Activated CD4-positive, alpha-beta memory T cell treated with anti-CD3 and anti-CD28 coated beads, Interleukin-2, amount 10 ng/mL, durations not matched to agents 7 days and 5 days (primary cell): ENCODE measurements at regions of chr2 and their contacts with region 1.

Region 1: GRCh38 chr2:157777427-157777826 is 98.7 kb downstream of the ACVR1 start:
- DNase-seq: peak; percentile 56
- H3K4me3 Mint-ChIP-seq: no peak overlapping the region
- H3K27ac Mint-ChIP-seq: no peak overlapping the region
- H3K4me1 Mint-ChIP-seq: peaks cover 11% of the 10 kb centered on the region
- H3K27me3 Mint-ChIP-seq: no peaks in the 10 kb centered on the region

Region 2: GRCh38 chr2:157592948-157593347 is 184.5 kb before region 1 on chr2:
- CTCF ChIA-PET with region 1: no interaction called
- POLR2A ChIA-PET with region 1: no interaction called
- DNase-seq: no peak
- H3K4me3 Mint-ChIP-seq: no peak overlapping the region
- H3K27ac Mint-ChIP-seq: no peak overlapping the region
- H3K4me1 Mint-ChIP-seq: peaks cover 6% of the 10 kb centered on the region
- H3K27me3 Mint-ChIP-seq: peaks cover 9% of the 10 kb centered on the region

Region 3: DNA sequence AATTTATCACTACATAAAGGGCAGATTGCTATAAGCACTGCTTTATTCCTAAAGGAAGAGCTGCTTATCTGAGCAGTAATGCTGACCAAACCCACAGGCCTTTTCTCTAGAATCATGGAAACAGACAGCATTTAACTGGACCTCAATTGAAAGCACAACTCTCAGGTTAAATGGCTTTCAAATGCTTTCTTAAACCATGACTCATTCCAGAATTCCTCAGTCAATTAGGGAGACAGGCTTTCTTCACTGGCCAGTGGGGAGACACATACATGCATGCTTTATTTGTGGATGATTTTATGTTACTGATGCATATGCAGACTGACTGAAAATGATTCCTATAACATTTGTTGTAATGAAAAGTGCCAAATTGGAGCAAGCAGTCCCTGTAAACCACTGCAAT is 15.9 kb before region 1 on chr2:
- CTCF ChIA-PET with region 1: no interaction called
- POLR2A ChIA-PET with region 1: no interaction called
- DNase-seq: no peak
- H3K4me3 Mint-ChIP-seq: no peak overlapping the region
- H3K27ac Mint-ChIP-seq: no peak overlapping the region
- H3K4me1 Mint-ChIP-seq: no peaks in the 10 kb centered on the region
- H3K27me3 Mint-ChIP-seq: no peaks in the 10 kb centered on the region

Region 4: DNA sequence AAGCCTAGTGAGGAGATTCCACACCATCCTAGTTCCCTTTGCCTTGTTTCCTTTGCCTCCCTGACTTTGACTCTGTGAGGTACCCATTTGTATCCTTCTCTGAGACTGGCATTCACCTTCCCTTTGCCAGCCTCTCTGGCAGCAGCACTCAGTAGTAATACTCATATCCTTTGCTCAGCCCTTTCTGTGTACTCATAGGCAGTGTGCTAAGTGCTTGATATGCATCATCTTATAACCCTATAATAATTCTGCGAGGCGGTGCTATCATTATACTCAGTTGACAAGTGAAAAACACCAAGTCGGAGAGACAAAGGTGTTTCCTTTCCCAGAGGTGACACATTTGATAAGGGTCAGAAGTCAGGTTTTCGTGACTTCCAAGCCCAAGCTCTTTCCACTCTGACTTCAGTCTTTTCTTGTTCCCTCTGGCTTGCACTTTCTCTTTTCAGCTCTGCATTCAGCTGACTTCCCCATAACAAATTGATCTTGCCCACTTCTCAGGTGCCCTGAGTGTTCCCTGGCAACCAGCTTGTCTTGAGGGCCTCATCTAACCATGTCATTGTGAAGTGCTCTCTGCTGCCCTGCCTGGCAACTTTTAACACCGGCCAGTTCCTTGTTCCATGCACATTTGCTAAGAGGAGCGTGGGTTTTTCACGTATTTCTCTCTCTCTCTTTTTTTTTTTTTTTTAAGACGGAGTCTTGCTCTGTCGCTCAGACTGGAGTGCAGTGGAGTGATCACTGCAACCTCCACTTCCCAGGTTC is 229.7 kb after region 1 on chr2:
- CTCF ChIA-PET with region 1: interaction called, 13 read pairs
- POLR2A ChIA-PET with region 1: no interaction called
- DNase-seq: no peak
- H3K4me3 Mint-ChIP-seq: no peak overlapping the region
- H3K27ac Mint-ChIP-seq: no peak overlapping the region
- H3K4me1 Mint-ChIP-seq: peaks cover 15% of the 10 kb centered on the region
- H3K27me3 Mint-ChIP-seq: peaks cover 1% of the 10 kb centered on the region